Aorta (tissue), 5 donors: ENCODE measurements at regions of chr11 and their contacts with region 1.

Region 1: GRCh38 chr11:93330446-93330984 is at the start of gene DEUP1:
- DNase-seq: peak; percentile 67 to 83
- ATAC-seq: peak; percentile 62
- H3K4me3 ChIP-seq: peak within 1 kb of the TSS; percentile 8 to 27
- H3K27ac ChIP-seq: no peak within 1 kb of the TSS
- H3K4me1 ChIP-seq: no peaks in the 10 kb centered on the region
- H3K27me3 ChIP-seq: no peaks in the 10 kb centered on the region
- total RNA-seq, gene DEUP1: not detected

Region 2: DNA sequence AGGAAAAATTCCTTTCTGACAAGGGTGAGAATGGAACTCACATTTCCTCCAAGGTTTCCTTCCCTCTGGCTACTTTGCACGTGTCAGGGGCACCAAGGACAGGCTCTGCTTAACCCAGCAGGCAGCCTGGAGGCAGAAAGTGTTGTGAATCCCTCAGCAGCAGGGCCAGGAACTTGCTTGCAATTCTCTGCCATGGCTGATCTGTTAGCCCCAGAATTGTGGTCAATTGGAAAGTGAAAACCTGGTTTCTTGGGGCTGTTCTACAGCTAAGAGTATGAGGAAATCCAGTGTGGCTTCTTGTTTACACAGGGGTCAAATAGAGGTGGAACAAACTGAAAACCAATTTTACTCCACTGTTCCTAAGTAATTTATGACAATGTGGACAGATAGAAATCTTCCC is 292.7 kb after region 1 on chr11:
- intact Hi-C with region 1: loop called in 1 of 2 experiments (anchors 10 kb)
- DNase-seq: no peak
- ATAC-seq: no peak
- H3K4me3 ChIP-seq: no peak overlapping the region
- H3K27ac ChIP-seq: no peak overlapping the region
- H3K4me1 ChIP-seq: no peaks in the 10 kb centered on the region
- H3K27me3 ChIP-seq: no peaks in the 10 kb centered on the region